ENCODE measurements at regions of chr6 and their contacts with region 1.

Region 1: DNA sequence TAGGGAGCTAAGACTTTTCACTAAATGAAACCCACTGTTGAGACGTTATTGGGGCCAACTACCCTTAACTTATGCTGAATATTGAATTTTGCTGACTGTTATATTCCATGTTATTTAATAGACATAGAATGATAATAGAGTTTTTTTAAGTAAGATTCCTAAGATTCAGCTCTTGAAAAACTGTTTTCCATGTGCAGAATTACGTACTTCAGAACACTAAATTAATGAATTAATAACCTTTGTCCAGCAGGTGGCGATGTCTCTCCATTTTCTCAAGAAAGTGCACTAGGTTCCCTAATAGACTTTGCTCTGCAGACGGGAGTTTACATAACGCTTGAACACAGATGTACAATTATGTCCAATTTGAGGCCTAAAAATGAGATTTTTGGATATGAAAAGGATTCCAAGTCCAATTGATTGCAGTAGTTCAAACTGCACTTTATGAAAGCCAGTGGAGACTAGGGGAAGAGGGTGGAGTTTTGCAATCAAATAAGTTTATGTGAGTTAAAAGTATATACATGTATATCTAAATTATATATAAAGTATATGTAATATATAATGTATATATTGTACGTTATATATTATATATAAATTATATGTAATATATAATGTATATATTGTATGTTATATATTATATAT is 282.1 kb downstream of the UST start:
- DNase-seq: peak; percentile 72
- ATAC-seq: no peak
- H3K4me3 ChIP-seq: no peak overlapping the region
- H3K27ac ChIP-seq: no peak overlapping the region
- H3K4me1 ChIP-seq: peaks cover 8% of the 10 kb centered on the region
- H3K27me3 ChIP-seq: no peaks in the 10 kb centered on the region
- CTCF ChIP-seq: peak; percentile 40 to 79 (median 53); a peak in 5 of 6 replicates
- EP300 ChIP-seq: no peak
- POLR2A ChIP-seq: no peak
- RAD21 ChIP-seq: peak; percentile 91

Region 2: GRCh38 chr6:148559848-148560433 is 468.9 kb before region 1 on chr6:
- CTCF ChIA-PET with region 1: interaction called, 5 read pairs
- POLR2A ChIA-PET with region 1: no interaction called
- RAD21 ChIA-PET with region 1: interaction called, 3 read pairs
- SMC1A ChIA-PET with region 1: no interaction called
- in situ Hi-C with region 1: no loop called
- intact Hi-C with region 1: loop called (anchors 5 kb)
- DNase-seq: no peak
- ATAC-seq: peak; percentile 97
- H3K4me3 ChIP-seq: 0 out of 2 replicates have a peak overlapping the region, but pooled peaks have one; percentile 39
- H3K27ac ChIP-seq: no peak overlapping the region
- H3K4me1 ChIP-seq: no peaks in the 10 kb centered on the region
- H3K27me3 ChIP-seq: peaks cover 0 to 4% of the 10 kb centered on the region in 2 experiments; a peak in 1 of 4 replicates
- CTCF ChIP-seq: peak; percentile 89 to 95 (median 92)
- EP300 ChIP-seq: no peak
- POLR2A ChIP-seq: no peak
- RAD21 ChIP-seq: peak; percentile 89

Region 3: DNA sequence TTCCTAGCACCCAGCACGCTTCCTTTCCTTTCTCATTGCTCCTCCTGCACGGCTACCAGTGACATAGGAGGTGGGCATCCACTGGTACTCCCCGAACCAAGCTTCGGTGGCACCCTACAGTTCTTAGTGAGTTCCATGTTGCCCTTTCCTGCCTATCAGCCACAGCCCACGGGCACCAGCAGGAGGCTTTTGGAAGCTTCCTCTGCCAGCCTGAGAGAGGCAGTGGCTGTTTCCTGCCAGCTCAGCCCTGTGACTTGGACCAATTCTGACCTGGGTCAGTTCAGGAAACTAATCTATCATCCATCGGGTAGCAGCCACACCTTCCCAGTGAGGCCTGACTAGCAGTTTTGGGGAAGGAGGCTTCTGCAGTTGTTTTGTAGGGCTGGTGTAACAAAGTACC is 458.4 kb before region 1 on chr6:
- CTCF ChIA-PET with region 1: no interaction called
- POLR2A ChIA-PET with region 1: no interaction called
- RAD21 ChIA-PET with region 1: no interaction called
- SMC1A ChIA-PET with region 1: no interaction called
- in situ Hi-C with region 1: no loop called
- intact Hi-C with region 1: no loop called
- DNase-seq: no peak
- ATAC-seq: no peak
- H3K4me3 ChIP-seq: no peak overlapping the region
- H3K27ac ChIP-seq: no peak overlapping the region
- H3K4me1 ChIP-seq: no peaks in the 10 kb centered on the region; the same call in 1 of the 2 replicates
- H3K27me3 ChIP-seq: peaks cover 0 to 3% of the 10 kb centered on the region in 2 experiments; a peak in 1 of 4 replicates
- CTCF ChIP-seq: no peak
- EP300 ChIP-seq: no peak
- POLR2A ChIP-seq: no peak
- RAD21 ChIP-seq: no peak

Region 4: GRCh38 chr6:149043476-149044130 is 14.7 kb after region 1 on chr6:
- CTCF ChIA-PET with region 1: interaction called, 228 read pairs
- POLR2A ChIA-PET with region 1: interaction called, 262 read pairs
- RAD21 ChIA-PET with region 1: interaction called, 322 read pairs
- SMC1A ChIA-PET with region 1: interaction called, 410 read pairs
- in situ Hi-C with region 1: no loop called
- intact Hi-C with region 1: loop called (anchors 1 kb)
- DNase-seq: no peak
- ATAC-seq: peak; percentile 43
- H3K4me3 ChIP-seq: no peak overlapping the region
- H3K27ac ChIP-seq: no peak overlapping the region
- H3K4me1 ChIP-seq: peaks cover 46% of the 10 kb centered on the region
- H3K27me3 ChIP-seq: no peaks in the 10 kb centered on the region
- CTCF ChIP-seq: peak; percentile 45 to 62 (median 45)
- EP300 ChIP-seq: no peak
- POLR2A ChIP-seq: no peak
- RAD21 ChIP-seq: peak; percentile 53; the same call in 1 of the 2 replicates

Region 5: DNA sequence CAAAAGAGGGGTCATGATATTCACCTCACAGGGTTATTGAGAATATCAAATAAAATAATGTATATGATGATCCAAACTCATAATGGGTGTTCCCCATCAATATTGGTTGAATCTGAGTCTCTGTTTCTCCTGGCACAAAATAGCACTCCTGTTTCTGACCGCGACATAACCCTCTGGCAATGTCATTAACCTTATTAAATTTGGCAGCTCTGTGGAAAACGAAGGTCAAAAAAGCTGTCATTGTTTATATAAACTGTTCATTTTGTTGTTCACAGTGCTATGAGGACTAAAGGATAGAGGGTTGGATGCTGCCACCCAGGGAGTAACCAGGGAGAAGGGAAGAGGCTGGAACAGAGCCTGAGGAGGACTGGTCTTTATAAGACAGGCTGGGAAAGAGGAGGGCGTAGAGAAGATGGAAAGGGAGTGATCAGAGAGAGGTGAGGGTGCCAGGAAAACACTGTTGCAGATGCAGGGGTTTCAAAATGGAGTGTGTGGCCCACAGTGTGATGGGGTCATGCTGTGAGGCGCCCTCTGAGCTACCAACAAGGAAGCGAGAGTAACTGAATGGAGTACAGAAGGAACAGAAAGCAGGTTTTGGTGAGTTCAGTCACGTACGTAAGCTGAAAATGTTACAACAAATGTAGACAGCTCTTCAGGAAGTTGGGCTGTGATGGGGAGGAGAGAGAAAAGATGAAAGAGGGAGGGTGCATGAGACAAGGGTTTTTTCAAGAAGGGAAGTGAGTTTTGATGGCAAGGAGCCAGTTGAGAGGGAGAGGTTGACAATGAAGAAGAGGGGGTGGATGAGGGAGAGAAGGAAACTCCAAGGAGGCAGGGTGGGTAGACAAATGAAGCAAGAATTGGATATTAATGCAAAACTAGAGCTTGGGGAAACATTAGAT is 37.0 kb after region 1 on chr6:
- CTCF ChIA-PET with region 1: interaction called, 156 read pairs
- POLR2A ChIA-PET with region 1: interaction called, 222 read pairs
- RAD21 ChIA-PET with region 1: interaction called, 521 read pairs
- SMC1A ChIA-PET with region 1: interaction called, 1,060 read pairs
- in situ Hi-C with region 1: no loop called
- intact Hi-C with region 1: loop called (anchors 5 kb)
- DNase-seq: peak; percentile 99
- ATAC-seq: peak; percentile 95
- H3K4me3 ChIP-seq: no peak overlapping the region; the same call in 1 of the 2 replicates
- H3K27ac ChIP-seq: peak overlapping the region; percentile 95
- H3K4me1 ChIP-seq: peaks cover 42% of the 10 kb centered on the region
- H3K27me3 ChIP-seq: no peaks in the 10 kb centered on the region
- CTCF ChIP-seq: no peak
- EP300 ChIP-seq: peak; percentile 91 to 97; a peak in 3 of 4 replicates
- POLR2A ChIP-seq: peak; percentile 76
- RAD21 ChIP-seq: no peak; the same call in 1 of the 2 replicates

Region 6: GRCh38 chr6:149112976-149113375 is 84.1 kb after region 1 on chr6:
- CTCF ChIA-PET with region 1: interaction called, 27 read pairs
- POLR2A ChIA-PET with region 1: no interaction called
- RAD21 ChIA-PET with region 1: interaction called, 54 read pairs
- SMC1A ChIA-PET with region 1: interaction called, 29 read pairs
- in situ Hi-C with region 1: no loop called
- intact Hi-C with region 1: no loop called
- DNase-seq: no peak
- ATAC-seq: peak; percentile 82
- H3K4me3 ChIP-seq: no peak overlapping the region
- H3K27ac ChIP-seq: peak overlapping the region; percentile 74
- H3K4me1 ChIP-seq: peaks cover 50% of the 10 kb centered on the region
- H3K27me3 ChIP-seq: no peaks in the 10 kb centered on the region
- CTCF ChIP-seq: no peak
- EP300 ChIP-seq: no peak
- POLR2A ChIP-seq: no peak
- RAD21 ChIP-seq: no peak

Region 7: GRCh38 chr6:149316798-149317655 is 288.1 kb after region 1 on chr6:
- CTCF ChIA-PET with region 1: interaction called, 3 read pairs
- POLR2A ChIA-PET with region 1: no interaction called
- RAD21 ChIA-PET with region 1: interaction called, 17 read pairs
- SMC1A ChIA-PET with region 1: interaction called, 5 read pairs
- in situ Hi-C with region 1: no loop called
- intact Hi-C with region 1: loop called (anchors 5 kb)
- DNase-seq: peak; percentile 57
- ATAC-seq: peak; percentile 79
- H3K4me3 ChIP-seq: peak overlapping the region; percentile 97
- H3K27ac ChIP-seq: peak overlapping the region; percentile 96
- H3K4me1 ChIP-seq: peaks cover 3% of the 10 kb centered on the region; the same call in 1 of the 2 replicates
- H3K27me3 ChIP-seq: no peaks in the 10 kb centered on the region
- CTCF ChIP-seq: 0 out of 6 replicates have a peak, but pooled peaks of 1 of the 3 experiments have one; percentile 2
- EP300 ChIP-seq: no peak
- POLR2A ChIP-seq: peak; percentile 86
- RAD21 ChIP-seq: 0 out of 2 replicates have a peak, but pooled peaks have one; percentile 28

Region 8: DNA sequence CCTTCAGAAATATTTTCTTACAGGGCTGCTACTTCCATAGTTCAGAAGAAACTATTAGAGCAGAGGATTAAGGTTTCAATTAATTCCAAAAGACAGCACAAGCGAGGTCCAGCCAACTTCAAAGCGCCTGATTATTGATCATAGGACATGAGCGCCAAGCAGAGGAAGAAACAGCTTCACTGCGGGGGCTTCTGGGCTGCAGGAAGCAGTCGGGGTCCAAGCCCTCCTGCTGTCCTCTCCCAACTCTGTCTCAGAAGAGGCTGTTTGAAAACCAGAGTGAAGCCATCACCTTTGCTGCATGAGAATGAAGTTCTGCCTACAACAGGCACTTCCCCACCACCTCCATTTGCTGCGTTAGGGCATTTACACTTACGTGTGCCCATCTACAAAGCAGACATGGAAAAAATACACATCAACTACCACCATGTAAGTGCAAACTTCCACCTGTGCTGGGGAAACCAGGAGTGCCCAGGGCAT is 395.1 kb after region 1 on chr6:
- CTCF ChIA-PET with region 1: interaction called, 169 read pairs
- POLR2A ChIA-PET with region 1: interaction called, 7 read pairs
- RAD21 ChIA-PET with region 1: interaction called, 20 read pairs
- SMC1A ChIA-PET with region 1: interaction called, 135 read pairs
- in situ Hi-C with region 1: loop called (anchors 5 kb)
- intact Hi-C with region 1: no loop called
- DNase-seq: no peak
- ATAC-seq: no peak
- H3K4me3 ChIP-seq: no peak overlapping the region
- H3K27ac ChIP-seq: no peak overlapping the region
- H3K4me1 ChIP-seq: peaks cover 11% of the 10 kb centered on the region
- H3K27me3 ChIP-seq: no peaks in the 10 kb centered on the region; a peak in 1 of 4 replicates
- CTCF ChIP-seq: no peak
- EP300 ChIP-seq: no peak
- POLR2A ChIP-seq: no peak
- RAD21 ChIP-seq: no peak